HCT116 (cell line): ENCODE measurements at regions of chr6 and their contacts with region 1.

Region 1: DNA sequence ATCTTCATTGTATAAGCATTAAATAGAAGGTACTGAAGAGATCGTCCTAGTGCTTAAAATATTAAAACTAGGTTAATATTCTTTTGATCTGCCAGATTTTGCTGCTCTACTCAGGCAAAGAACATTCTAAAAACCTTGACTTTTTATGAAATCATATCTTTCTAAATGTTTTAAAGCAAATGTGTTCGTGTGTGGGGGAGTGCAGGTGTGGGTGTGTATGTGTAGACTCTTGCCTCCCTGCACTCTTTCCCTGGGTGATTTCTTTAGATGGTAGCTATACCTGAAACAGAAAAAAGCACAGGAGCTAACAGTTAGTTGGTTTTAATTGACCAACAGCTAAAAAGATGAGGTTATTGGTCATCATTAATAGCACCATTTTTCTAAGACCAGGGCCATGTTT is 5.7 kb downstream of the NRSN1 start:
- DNase-seq: no peak
- ATAC-seq: no peak
- H3K4me3 ChIP-seq: no peak overlapping the region
- H3K27ac ChIP-seq: no peak overlapping the region
- H3K4me1 ChIP-seq: no peaks in the 10 kb centered on the region
- H3K27me3 ChIP-seq: no peaks in the 10 kb centered on the region
- CTCF ChIP-seq: no peak
- POLR2A ChIP-seq: no peak
- RAD21 ChIP-seq: no peak

Region 2: DNA sequence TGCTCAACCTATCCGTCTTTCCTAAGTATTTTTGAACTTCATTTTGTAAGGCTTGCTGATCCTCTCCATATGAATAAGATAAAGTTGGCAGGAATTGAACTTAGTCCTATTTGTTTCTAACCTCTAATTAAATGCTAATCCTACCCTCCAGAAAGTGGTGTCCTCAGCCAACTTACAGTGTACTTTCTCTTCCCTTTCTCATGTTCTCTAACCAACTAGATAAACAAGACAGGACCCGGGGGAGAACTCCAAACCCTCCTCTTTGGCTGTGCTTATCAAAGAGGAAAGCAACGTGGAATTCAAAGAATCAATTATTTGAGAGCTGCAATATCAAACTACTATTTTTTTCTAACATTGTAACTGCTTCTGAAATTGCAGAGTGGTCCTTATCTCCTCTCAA is 62.2 kb before region 1 on chr6:
- CTCF ChIA-PET with region 1: no interaction called
- POLR2A ChIA-PET with region 1: no interaction called
- RAD21 ChIA-PET with region 1: no interaction called
- intact Hi-C with region 1: loop called (anchors 5 kb)
- DNase-seq: no peak
- ATAC-seq: no peak
- H3K4me3 ChIP-seq: no peak overlapping the region
- H3K27ac ChIP-seq: no peak overlapping the region
- H3K4me1 ChIP-seq: no peaks in the 10 kb centered on the region
- H3K27me3 ChIP-seq: no peaks in the 10 kb centered on the region
- CTCF ChIP-seq: no peak
- POLR2A ChIP-seq: no peak
- RAD21 ChIP-seq: no peak